Ascending aorta (tissue), 2 donors: ENCODE measurements at regions of chr17 and their contacts with region 1.

Region 1: GRCh38 chr17:18314731-18315561 is at the starts of genes SMCR8 and TOP3A:
- DNase-seq: peak; percentile 96 to 99
- H3K4me3 ChIP-seq: peak within 1 kb of the TSS; percentile 79 to 83
- H3K27ac ChIP-seq: peak within 1 kb of the TSS; percentile 81 to 92
- H3K4me1 ChIP-seq: peaks cover 9 to 46% of the 10 kb centered on the region in 2 donors
- H3K27me3 ChIP-seq: no peaks in the 10 kb centered on the region
- CTCF ChIP-seq: no peak
- total RNA-seq, gene SMCR8: 10.3 TPM
- total RNA-seq, gene TOP3A: 52.8 TPM

Region 2: GRCh38 chr17:18043491-18043890 is 271.5 kb before region 1 on chr17:
- intact Hi-C with region 1: no loop called
- DNase-seq: no peak
- H3K4me3 ChIP-seq: no peak overlapping the region
- H3K27ac ChIP-seq: no peak overlapping the region
- H3K4me1 ChIP-seq: peaks cover 0 to 8% of the 10 kb centered on the region in 2 donors
- H3K27me3 ChIP-seq: no peaks in the 10 kb centered on the region
- CTCF ChIP-seq: no peak

Region 3: DNA sequence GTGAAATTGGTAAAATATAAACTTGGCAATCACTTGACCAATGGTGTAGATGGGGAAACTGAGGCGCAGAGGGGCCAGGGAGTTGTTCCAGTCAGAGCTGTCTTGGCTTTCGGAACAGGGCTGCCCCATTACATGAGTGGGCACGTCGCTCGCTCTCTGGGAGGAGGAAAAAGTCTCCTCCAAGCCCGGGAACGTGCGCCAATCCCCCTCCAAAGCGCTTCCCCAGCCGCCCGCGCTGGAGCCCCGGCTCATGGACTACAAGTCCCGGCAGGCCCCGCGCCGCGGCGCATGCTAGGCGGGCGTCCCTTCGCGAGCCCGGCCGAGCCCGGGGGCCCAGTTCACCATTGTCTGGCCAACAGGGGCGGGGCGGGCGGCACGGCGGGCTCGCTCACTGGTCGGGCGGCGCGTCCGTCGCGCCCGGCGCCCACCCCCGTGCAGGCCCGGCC is 89.8 kb before region 1 on chr17:
- intact Hi-C with region 1: loop called (anchors 5 kb)
- DNase-seq: peak; percentile 85 to 98
- H3K4me3 ChIP-seq: peak overlapping the region; percentile 44 to 61
- H3K27ac ChIP-seq: peak overlapping the region; percentile 31 to 49
- H3K4me1 ChIP-seq: peaks cover 4 to 14% of the 10 kb centered on the region in 2 donors
- H3K27me3 ChIP-seq: no peaks in the 10 kb centered on the region
- CTCF ChIP-seq: no peak

Region 4: GRCh38 chr17:18267927-18268711 is 46.8 kb before region 1 on chr17:
- intact Hi-C with region 1: loop called (anchors 5 kb)
- DNase-seq: no peak
- H3K4me3 ChIP-seq: no peak overlapping the region
- H3K27ac ChIP-seq: no peak overlapping the region
- H3K4me1 ChIP-seq: peaks cover 0 to under 1% of the 10 kb centered on the region in 2 donors
- H3K27me3 ChIP-seq: no peaks in the 10 kb centered on the region
- CTCF ChIP-seq: no peak

Region 5: GRCh38 chr17:18332909-18333489 is 18.1 kb after region 1 on chr17:
- intact Hi-C with region 1: no loop called
- DNase-seq: no peak
- H3K4me3 ChIP-seq: no peak overlapping the region
- H3K27ac ChIP-seq: no peak overlapping the region
- H3K4me1 ChIP-seq: no peaks in the 10 kb centered on the region
- H3K27me3 ChIP-seq: no peaks in the 10 kb centered on the region
- CTCF ChIP-seq: no peak

Region 6: DNA sequence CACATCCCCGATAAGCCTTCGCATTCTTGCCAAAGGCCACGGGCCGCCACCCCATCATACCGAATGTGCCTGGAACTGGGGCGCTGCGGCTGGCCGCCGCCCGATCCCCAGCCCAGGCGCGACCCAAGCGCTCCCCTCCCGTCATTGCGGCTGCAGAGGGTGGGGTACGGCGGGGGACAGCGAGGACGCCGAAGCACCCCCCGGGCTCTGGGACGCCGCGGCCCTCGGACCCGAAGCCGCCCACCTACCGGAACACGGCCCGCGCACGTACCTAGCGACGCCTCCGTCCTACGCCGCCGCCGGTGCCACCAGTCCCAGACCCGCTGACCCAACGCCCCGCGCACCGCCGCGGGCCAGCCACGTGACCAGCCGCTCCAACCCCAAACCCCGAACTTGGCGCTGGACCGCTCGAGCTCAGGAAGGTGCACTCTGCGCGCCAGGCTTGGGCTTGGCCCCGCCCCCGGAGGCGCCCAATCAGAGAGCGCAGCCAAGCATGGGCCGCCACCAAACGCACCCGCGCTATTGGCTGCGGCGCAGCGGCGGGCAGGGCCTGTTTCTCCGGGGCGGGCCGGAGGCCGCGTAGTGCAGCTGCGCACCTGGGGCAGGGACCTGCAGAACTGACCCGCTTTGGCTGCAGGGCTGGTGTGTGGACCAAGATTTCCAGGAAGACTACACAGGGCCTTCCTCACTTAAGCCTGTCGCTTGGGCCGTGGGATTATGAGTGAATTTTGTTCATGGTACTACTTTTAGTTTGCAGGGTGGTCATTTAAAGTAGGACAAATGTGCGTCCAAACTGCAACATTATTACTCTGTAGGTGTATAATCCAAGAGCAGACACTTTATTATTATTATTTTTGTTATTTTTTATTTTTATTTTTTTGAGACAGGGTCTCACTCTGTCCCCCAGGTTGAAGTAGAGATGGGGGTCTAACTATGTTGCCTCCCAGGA is 48.4 kb after region 1 on chr17 and contains the start of gene SHMT1:
- intact Hi-C with region 1: loop called (anchors 5 kb)
- DNase-seq: peak; percentile 83 to 96
- H3K4me3 ChIP-seq: peak within 1 kb of the TSS; percentile 86 to 89
- H3K27ac ChIP-seq: peak within 1 kb of the TSS; percentile 66 to 72
- H3K4me1 ChIP-seq: peaks cover 0 to 6% of the 10 kb centered on the region in 2 donors
- H3K27me3 ChIP-seq: no peaks in the 10 kb centered on the region
- CTCF ChIP-seq: no peak
- total RNA-seq, gene SHMT1: 16.7 TPM